Posterior cingulate gyrus (tissue), 11 donors: ENCODE measurements at regions of chr6 and their contacts with region 1.

Region 1: DNA sequence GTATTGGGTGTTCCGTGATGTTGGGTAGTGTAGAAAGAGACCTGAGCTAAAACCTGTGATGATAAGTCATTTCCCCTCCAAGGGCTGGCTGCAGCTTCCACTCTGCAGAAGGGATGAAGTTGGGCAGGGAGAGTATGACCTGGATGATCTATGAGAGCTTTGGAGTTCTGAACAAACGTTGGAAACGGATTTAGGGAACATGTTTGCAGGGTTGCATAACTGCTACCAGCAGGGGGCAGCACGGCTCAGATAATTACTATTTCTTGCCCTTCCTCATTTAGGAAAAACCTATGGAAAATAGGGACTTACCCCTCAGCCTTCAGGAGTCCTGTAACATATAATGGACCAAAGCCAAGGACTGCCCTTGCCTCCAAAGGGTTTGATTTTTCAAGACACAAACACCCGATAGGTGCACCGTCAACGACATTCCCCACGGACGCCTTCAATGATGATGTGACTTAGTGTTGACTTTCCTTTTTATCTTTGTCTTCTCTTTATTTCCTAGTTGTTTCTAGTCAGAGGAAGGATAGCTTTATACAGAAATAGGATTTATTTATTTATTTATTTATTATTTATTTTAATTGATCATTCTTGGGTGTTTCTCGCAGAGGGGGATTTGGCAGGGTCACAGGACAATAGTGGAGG is 164.9 kb upstream of the SASH1 start:
- DNase-seq: peak in 9 of 10 donors; percentile 21 to 93 (median 72)

Region 2: GRCh38 chr6:146682919-146683318 is 1494.8 kb before region 1 on chr6:
- intact Hi-C with region 1: no loop called
- DNase-seq: no peak

Region 3: DNA sequence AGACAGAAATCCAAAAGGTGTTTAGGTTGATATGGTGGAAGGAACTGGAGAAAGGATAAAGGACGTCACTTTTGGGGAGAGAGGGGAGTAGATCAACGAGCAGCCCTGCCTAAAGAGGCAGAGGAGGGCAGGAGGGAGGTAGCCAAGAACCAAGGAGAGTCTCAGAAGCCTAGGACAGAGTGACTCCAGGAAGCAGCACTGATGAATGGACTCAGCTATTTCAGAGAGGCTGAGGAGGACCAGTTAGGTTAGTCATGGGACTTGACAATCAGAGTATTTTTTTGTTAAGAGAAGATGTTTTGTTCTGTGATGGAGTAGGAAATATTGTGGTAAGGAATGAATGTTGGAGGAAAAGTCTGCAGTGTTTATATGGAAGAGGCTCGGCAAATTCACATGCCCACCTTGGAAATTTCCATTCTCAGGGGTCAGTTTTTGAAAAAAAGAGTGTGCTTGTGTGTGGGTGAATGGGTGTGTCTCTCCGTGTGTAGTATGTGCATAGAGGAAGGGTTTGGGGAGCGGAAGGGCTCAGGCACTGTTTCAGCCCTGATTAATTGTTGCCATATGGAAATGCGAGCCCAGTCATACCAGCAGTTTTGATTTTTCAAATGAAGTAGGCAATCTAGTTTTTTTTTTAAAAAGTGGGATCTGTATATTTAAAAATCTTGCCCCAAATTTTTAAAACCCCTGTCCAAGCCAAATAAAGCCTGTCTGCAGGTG is 365.6 kb before region 1 on chr6:
- intact Hi-C with region 1: no loop called
- DNase-seq: no peak

Region 4: GRCh38 chr6:148223424-148223842 is 45.7 kb after region 1 on chr6:
- intact Hi-C with region 1: no loop called
- DNase-seq: no peak

Region 5: DNA sequence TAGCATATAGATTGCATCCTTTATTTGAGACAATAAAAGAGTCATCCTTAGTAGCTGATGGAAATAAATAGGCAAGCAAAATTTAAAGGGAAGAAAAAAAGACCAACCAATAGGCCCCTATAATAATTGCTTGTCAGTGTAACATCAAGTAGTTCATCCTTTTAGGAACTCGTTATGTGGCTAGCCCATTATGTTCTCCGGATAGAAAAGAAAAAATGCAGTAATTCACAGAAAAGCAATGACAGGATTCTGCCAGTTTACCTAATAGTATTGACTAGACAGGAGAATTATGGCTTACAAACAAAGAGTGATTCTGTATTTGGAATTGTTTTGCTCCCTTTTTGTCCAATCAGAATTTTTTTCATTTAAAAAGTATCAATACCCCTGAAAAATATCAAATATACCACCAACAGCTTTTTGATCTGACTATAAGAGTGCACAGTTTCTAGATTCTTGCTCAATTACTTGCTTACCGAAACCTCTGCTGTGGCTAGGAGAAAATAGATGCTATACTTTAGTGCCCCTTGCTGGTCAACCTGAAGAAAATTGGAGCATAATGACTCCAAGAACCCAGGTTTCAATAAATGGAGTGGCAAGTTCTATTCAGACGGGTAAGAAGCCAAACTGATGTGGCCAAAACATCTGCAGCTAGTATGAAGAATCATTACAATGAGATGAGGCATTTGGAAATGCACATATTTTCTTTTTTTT is 73.4 kb after region 1 on chr6:
- intact Hi-C with region 1: loop called (anchors 1 kb)
- DNase-seq: no peak

Region 6: DNA sequence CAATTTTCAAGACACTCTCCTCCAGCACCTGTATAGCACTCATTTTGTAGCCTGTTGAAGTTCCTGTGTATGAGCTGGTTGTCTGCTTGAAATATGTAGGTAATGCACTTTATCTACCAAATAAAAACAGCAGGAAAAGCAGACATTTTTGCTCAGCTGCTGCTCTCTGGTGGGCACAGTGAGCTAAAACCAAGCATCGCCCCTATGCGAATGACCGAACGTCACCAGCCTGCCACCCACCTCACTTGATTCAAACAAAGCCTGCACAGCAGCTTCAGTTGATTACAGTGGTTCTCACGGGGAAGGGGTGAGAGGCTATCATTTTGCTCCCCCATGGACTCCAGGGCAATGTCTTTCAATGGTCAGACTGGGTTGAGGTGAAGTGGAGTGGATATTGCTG is 350.6 kb after region 1 on chr6:
- intact Hi-C with region 1: loop called (anchors 5 kb)
- DNase-seq: peak in 5 of 10 donors; percentile 49 to 94 (median 69)

Region 7: GRCh38 chr6:148790817-148791216 is 613.1 kb after region 1 on chr6:
- intact Hi-C with region 1: no loop called
- DNase-seq: no peak